ENCODE measurements at regions of chr12 and their contacts with region 1.

Region 1: GRCh38 chr12:56987551-56988053 is 18.7 kb downstream of the ZBTB39 start:
- DNase-seq: peak; percentile 67 to 80
- H3K4me3 ChIP-seq: no peak overlapping the region
- H3K4me3 Mint-ChIP-seq: no peak overlapping the region
- H3K27ac Mint-ChIP-seq: no peak overlapping the region
- H3K4me1 ChIP-seq: peaks cover 15% of the 10 kb centered on the region
- H3K4me1 Mint-ChIP-seq: peaks cover 20% of the 10 kb centered on the region
- H3K27me3 ChIP-seq: no peaks in the 10 kb centered on the region
- H3K27me3 Mint-ChIP-seq: no peaks in the 10 kb centered on the region
- CTCF ChIP-seq: peak; percentile 88 to 90

Region 2: DNA sequence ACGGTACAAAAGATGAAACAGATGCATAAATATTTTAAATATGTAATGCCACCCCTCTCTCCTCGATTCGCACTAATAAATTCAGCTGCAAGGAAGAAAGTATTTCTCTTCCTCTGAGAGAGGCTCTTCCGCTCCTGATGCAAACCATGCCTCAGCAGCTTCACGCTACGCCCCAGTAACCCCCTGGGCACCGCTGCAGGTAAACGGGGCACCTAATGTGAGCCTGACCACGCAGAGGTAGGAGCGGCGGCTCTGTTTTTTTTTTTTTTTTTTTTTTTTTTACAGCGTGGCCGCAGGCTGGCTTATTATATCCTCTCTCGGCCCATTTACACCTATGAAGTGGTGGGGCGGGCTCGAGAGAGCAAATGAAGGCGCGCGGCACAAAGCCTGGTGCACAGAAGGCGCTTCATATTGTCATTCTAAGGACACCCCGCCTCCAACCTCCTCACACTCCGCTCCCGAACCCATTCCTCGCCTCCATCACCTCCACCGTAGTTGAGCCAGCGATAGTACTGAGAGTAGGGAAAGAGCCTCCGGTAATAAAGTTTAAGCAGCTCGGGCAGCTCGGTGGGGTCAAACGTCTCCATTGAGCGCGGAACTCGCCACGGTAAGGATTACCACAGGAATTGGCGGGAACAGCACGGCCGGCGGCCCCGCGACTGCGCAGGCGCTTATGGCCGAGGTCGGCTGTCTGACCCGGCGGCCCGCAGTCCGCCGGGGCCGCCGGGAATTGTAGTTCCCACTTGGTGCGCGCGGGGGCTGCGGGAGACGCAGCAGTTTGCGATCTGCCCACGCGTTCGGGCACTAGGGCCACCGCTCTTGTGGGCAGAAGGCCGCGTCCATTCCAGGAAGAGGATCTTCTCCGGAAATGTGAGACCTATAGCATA is 235.6 kb before region 1 on chr12 and contains the start of gene PRIM1:
- CTCF ChIA-PET with region 1: interaction called, 4 read pairs
- POLR2A ChIA-PET with region 1: no interaction called
- intact Hi-C with region 1: loop called (anchors 2 kb)
- DNase-seq: peak; percentile 88 to 90
- H3K4me3 ChIP-seq: peak within 1 kb of the TSS; percentile 57
- H3K4me3 Mint-ChIP-seq: peak within 1 kb of the TSS; percentile 96
- H3K27ac Mint-ChIP-seq: peak within 1 kb of the TSS; percentile 81
- H3K4me1 ChIP-seq: no peaks in the 10 kb centered on the region
- H3K4me1 Mint-ChIP-seq: peaks cover 9% of the 10 kb centered on the region
- H3K27me3 ChIP-seq: no peaks in the 10 kb centered on the region
- H3K27me3 Mint-ChIP-seq: no peaks in the 10 kb centered on the region
- CTCF ChIP-seq: peak in 1 of 2 experiments; percentile 76
- total RNA-seq, gene PRIM1: 38.0 and 40.2 TPM in 2 replicates

Region 3: DNA sequence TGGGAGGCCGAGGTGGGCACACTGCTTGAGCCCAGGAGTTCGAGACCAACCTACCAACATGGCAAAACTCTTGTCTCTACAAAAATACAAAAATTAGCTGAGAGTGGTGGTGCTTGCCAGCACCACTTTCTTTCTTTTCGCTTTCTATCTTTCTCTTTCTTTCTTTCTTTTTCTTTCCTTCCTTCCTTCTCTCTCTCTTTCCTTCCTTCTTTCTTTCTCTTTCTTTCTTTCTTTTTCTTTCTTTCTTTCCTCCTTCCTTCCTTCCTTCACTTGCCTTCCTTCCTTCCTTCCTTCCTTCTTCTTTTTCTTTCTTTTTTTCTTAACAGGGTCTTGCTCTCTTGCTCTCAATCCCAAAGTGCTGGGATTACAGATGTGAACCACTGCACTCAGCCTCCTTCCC is 157.7 kb before region 1 on chr12:
- CTCF ChIA-PET with region 1: no interaction called
- POLR2A ChIA-PET with region 1: no interaction called
- intact Hi-C with region 1: no loop called
- DNase-seq: no peak
- H3K4me3 ChIP-seq: no peak overlapping the region
- H3K4me3 Mint-ChIP-seq: no peak overlapping the region
- H3K27ac Mint-ChIP-seq: no peak overlapping the region
- H3K4me1 ChIP-seq: no peaks in the 10 kb centered on the region
- H3K4me1 Mint-ChIP-seq: no peaks in the 10 kb centered on the region
- H3K27me3 ChIP-seq: no peaks in the 10 kb centered on the region
- H3K27me3 Mint-ChIP-seq: peaks cover 8% of the 10 kb centered on the region
- CTCF ChIP-seq: no peak

Region 4: DNA sequence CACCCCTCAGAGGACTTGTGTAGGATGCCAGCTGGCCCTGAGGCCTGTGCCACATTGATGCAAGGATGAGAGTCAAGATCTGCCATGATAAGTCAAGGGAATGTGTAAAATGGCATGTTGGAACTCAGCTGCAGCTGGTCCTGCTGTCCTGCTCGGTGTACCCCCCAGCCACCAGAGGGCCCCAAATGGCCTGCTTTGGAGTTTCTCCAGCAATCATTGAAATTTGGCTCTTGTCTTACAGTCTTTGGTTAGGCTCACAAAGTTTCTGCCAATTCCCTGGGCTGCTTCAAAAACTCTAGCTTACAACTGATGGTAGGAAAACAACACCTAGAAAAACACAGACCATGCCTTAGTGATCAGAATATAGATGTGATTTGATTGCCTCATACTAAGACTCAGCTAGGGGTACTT is 147.7 kb before region 1 on chr12:
- CTCF ChIA-PET with region 1: interaction called, 20 read pairs
- POLR2A ChIA-PET with region 1: no interaction called
- intact Hi-C with region 1: loop called (anchors 1 kb)
- DNase-seq: peak; percentile 67 to 77
- H3K4me3 ChIP-seq: no peak overlapping the region
- H3K4me3 Mint-ChIP-seq: no peak overlapping the region
- H3K27ac Mint-ChIP-seq: no peak overlapping the region
- H3K4me1 ChIP-seq: no peaks in the 10 kb centered on the region
- H3K4me1 Mint-ChIP-seq: no peaks in the 10 kb centered on the region
- H3K27me3 ChIP-seq: no peaks in the 10 kb centered on the region
- H3K27me3 Mint-ChIP-seq: peaks cover 7% of the 10 kb centered on the region
- CTCF ChIP-seq: peak; percentile 73 to 88

Region 5: DNA sequence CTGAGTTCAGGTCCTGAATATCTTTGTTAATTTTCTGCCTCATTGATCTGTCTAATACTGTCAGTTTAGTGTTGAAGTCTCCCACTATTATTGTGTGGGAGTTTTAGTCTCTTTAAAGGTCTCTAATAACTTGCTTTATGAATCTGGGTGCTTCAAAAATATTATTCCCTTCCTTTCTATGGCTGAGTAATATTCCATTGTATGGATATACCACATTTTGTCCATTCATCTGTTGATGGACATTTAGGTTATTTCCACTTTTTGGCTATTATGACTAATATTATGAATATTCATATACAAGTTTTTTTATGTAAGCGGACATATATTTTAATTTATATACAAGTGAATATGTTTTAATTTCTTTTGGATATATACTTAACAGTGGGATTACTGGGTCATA is 136.1 kb before region 1 on chr12:
- CTCF ChIA-PET with region 1: no interaction called
- POLR2A ChIA-PET with region 1: no interaction called
- intact Hi-C with region 1: no loop called
- DNase-seq: no peak
- H3K4me3 ChIP-seq: no peak overlapping the region
- H3K4me3 Mint-ChIP-seq: no peak overlapping the region
- H3K27ac Mint-ChIP-seq: no peak overlapping the region
- H3K4me1 ChIP-seq: no peaks in the 10 kb centered on the region
- H3K4me1 Mint-ChIP-seq: no peaks in the 10 kb centered on the region
- H3K27me3 ChIP-seq: no peaks in the 10 kb centered on the region
- H3K27me3 Mint-ChIP-seq: peaks cover 2% of the 10 kb centered on the region
- CTCF ChIP-seq: no peak

Region 6: GRCh38 chr12:56947633-56948456 is 39.8 kb before region 1 on chr12:
- CTCF ChIA-PET with region 1: interaction called, 3 read pairs
- POLR2A ChIA-PET with region 1: no interaction called
- intact Hi-C with region 1: loop called (anchors 1 kb)
- DNase-seq: peak in 1 of 2 experiments; percentile 50
- H3K4me3 ChIP-seq: no peak overlapping the region
- H3K4me3 Mint-ChIP-seq: no peak overlapping the region
- H3K27ac Mint-ChIP-seq: no peak overlapping the region
- H3K4me1 ChIP-seq: no peaks in the 10 kb centered on the region
- H3K4me1 Mint-ChIP-seq: no peaks in the 10 kb centered on the region
- H3K27me3 ChIP-seq: no peaks in the 10 kb centered on the region
- H3K27me3 Mint-ChIP-seq: no peaks in the 10 kb centered on the region
- CTCF ChIP-seq: no peak

Region 7: GRCh38 chr12:57001448-57001906 is 13.9 kb after region 1 on chr12:
- CTCF ChIA-PET with region 1: interaction called, 14 read pairs
- POLR2A ChIA-PET with region 1: no interaction called
- intact Hi-C with region 1: no loop called
- DNase-seq: peak; percentile 83 to 88
- H3K4me3 ChIP-seq: no peak overlapping the region
- H3K4me3 Mint-ChIP-seq: no peak overlapping the region
- H3K27ac Mint-ChIP-seq: no peak overlapping the region
- H3K4me1 ChIP-seq: peaks cover 17% of the 10 kb centered on the region
- H3K4me1 Mint-ChIP-seq: peaks cover 26% of the 10 kb centered on the region
- H3K27me3 ChIP-seq: no peaks in the 10 kb centered on the region
- H3K27me3 Mint-ChIP-seq: no peaks in the 10 kb centered on the region
- CTCF ChIP-seq: peak; percentile 75 to 79

Region 8: DNA sequence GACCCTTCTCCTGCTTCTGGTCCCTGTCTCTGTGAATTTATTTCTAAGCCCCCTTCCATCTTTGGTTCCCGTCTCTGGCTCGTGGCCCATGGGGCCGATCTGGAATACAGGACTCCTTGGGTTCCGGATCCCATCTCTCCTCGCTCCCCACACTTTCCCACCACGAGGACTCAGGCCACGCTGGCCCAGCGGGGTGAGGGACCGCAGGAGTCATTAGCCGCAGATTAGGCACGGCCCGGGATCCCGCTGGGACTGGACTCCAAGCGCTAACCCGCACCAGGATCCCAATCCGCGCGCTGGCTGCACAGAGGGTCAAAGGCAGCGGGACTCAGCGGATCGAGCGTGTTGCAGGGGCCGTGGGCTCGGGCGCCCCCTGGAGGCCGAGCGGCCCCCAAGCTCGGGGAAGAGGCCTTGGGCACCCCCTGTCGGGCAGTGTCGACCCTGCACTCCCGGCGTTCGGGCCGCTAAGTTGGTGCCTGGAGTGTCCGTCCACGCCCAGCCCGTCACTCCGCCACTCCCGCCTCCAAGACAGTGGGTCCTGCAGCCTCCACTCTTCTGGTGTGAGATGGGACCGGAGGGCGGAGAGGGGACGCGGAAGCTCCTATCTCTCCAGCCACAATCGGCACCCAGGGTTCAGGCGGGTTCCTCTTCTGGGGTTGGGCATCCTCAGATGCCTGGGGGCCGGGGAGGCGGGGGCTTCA is 251.4 kb after region 1 on chr12:
- CTCF ChIA-PET with region 1: no interaction called
- POLR2A ChIA-PET with region 1: no interaction called
- intact Hi-C with region 1: no loop called
- DNase-seq: peak; percentile 78 to 92
- H3K4me3 ChIP-seq: peak overlapping the region; percentile 43
- H3K4me3 Mint-ChIP-seq: peak overlapping the region; percentile 79
- H3K27ac Mint-ChIP-seq: peak overlapping the region; percentile 83
- H3K4me1 ChIP-seq: peaks cover 19% of the 10 kb centered on the region
- H3K4me1 Mint-ChIP-seq: peaks cover 43% of the 10 kb centered on the region
- H3K27me3 ChIP-seq: peaks cover 7% of the 10 kb centered on the region
- H3K27me3 Mint-ChIP-seq: peaks cover 7% of the 10 kb centered on the region
- CTCF ChIP-seq: peak; percentile 100

Measured in Caco-2 (cell line).